PC-9 (cell line): ENCODE measurements at regions of chr2 and their contacts with region 1.

Region 1: GRCh38 chr2:241355983-241356870 is at the start of gene FARP2:
- DNase-seq: peak; percentile 97 to 100
- H3K4me3 ChIP-seq: peak within 1 kb of the TSS; percentile 89
- H3K27ac ChIP-seq: peak within 1 kb of the TSS; percentile 53
- H3K4me1 ChIP-seq: peaks cover 44% of the 10 kb centered on the region
- H3K27me3 ChIP-seq: no peaks in the 10 kb centered on the region
- CTCF ChIP-seq: no peak
- total RNA-seq, gene FARP2: 81.5 and 89.1 TPM in 2 replicates

Region 2: GRCh38 chr2:240851078-240851991 is 504.9 kb before region 1 on chr2:
- CTCF ChIA-PET with region 1: no interaction called
- POLR2A ChIA-PET with region 1: no interaction called
- intact Hi-C with region 1: loop called (anchors 10 kb)
- DNase-seq: peak; percentile 64 to 91
- H3K4me3 ChIP-seq: no peak overlapping the region
- H3K27ac ChIP-seq: no peak overlapping the region
- H3K4me1 ChIP-seq: no peaks in the 10 kb centered on the region
- H3K27me3 ChIP-seq: no peaks in the 10 kb centered on the region
- CTCF ChIP-seq: peak; percentile 97

Region 3: GRCh38 chr2:241232736-241233554 is 123.3 kb before region 1 on chr2:
- CTCF ChIA-PET with region 1: no interaction called
- POLR2A ChIA-PET with region 1: no interaction called
- intact Hi-C with region 1: no loop called
- DNase-seq: no peak
- H3K4me3 ChIP-seq: no peak overlapping the region
- H3K27ac ChIP-seq: no peak overlapping the region
- H3K4me1 ChIP-seq: no peaks in the 10 kb centered on the region
- H3K27me3 ChIP-seq: no peaks in the 10 kb centered on the region
- CTCF ChIP-seq: no peak

Region 4: GRCh38 chr2:241315093-241315878 is 40.9 kb before region 1 on chr2 and contains the start of gene HDLBP:
- CTCF ChIA-PET with region 1: no interaction called
- POLR2A ChIA-PET with region 1: interaction called, 3 read pairs
- intact Hi-C with region 1: loop called (anchors 5 kb)
- DNase-seq: peak; percentile 95 to 100
- H3K4me3 ChIP-seq: peak within 1 kb of the TSS; percentile 95
- H3K27ac ChIP-seq: peak within 1 kb of the TSS; percentile 96
- H3K4me1 ChIP-seq: peaks cover 39% of the 10 kb centered on the region
- H3K27me3 ChIP-seq: no peaks in the 10 kb centered on the region
- CTCF ChIP-seq: no peak
- total RNA-seq, gene HDLBP: 715 and 908 TPM in 2 replicates

Region 5: DNA sequence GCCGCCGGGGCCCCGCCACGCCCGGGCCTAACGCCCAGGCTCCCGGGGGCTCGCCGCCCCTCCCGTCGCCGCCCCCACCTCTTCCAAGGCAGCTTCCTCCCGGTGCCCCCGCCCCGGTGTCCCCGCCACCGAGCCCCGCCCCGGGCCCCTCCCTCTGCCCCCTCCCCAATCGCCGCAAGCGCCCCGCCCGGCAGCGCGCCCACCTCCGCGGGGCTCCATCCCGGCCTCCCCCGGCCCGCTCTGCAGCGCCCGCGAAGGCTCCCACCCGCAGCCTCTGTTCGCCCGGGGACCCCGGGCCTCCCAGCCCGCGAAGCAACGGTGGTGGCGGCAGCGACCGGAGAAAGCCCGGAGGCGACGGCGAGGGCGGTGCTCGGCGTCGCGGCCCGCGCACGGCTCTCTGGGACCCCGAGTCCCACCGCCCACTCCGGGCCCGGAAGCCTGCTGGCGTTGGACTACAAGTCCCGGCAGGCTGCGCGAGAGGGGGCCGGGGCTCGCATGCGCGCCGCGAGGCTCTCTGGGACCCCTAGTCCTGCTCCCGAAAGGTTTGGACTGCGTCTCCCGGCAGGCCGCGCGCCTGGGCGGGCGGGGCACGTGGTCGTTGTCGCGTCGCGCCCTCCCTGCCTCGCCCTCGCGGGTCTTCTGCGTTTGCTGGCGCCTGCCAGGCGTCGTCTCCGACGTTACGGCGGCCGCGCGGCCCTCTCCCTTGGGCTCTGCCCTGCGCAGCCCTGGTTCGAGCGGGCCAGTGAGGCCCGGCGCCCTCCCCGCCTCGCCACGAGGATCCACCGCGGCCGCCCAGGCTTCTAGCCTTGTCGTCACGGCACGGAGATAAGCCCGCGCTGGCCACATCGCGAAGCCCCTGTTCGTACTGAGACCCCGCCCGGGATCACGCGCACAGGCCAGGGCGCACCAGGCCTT is 152.3 kb after region 1 on chr2 and contains the start of gene STK25:
- CTCF ChIA-PET with region 1: no interaction called
- POLR2A ChIA-PET with region 1: no interaction called
- intact Hi-C with region 1: loop called (anchors 1 kb)
- DNase-seq: peak; percentile 96 to 100
- H3K4me3 ChIP-seq: peak within 1 kb of the TSS; percentile 97
- H3K27ac ChIP-seq: peak within 1 kb of the TSS; percentile 52; the same call in 1 of the 2 replicates
- H3K4me1 ChIP-seq: peaks cover 19% of the 10 kb centered on the region
- H3K27me3 ChIP-seq: no peaks in the 10 kb centered on the region
- CTCF ChIP-seq: no peak
- total RNA-seq, gene STK25: 201 and 268 TPM in 2 replicates

Region 6: GRCh38 chr2:241598480-241598879 is 242.3 kb after region 1 on chr2:
- CTCF ChIA-PET with region 1: no interaction called
- POLR2A ChIA-PET with region 1: no interaction called
- intact Hi-C with region 1: loop called (anchors 5 kb)
- DNase-seq: peak; percentile 48 to 64
- H3K4me3 ChIP-seq: no peak overlapping the region
- H3K27ac ChIP-seq: no peak overlapping the region
- H3K4me1 ChIP-seq: no peaks in the 10 kb centered on the region
- H3K27me3 ChIP-seq: no peaks in the 10 kb centered on the region
- CTCF ChIP-seq: peak; percentile 61; the same call in 1 of the 2 replicates

Region 7: DNA sequence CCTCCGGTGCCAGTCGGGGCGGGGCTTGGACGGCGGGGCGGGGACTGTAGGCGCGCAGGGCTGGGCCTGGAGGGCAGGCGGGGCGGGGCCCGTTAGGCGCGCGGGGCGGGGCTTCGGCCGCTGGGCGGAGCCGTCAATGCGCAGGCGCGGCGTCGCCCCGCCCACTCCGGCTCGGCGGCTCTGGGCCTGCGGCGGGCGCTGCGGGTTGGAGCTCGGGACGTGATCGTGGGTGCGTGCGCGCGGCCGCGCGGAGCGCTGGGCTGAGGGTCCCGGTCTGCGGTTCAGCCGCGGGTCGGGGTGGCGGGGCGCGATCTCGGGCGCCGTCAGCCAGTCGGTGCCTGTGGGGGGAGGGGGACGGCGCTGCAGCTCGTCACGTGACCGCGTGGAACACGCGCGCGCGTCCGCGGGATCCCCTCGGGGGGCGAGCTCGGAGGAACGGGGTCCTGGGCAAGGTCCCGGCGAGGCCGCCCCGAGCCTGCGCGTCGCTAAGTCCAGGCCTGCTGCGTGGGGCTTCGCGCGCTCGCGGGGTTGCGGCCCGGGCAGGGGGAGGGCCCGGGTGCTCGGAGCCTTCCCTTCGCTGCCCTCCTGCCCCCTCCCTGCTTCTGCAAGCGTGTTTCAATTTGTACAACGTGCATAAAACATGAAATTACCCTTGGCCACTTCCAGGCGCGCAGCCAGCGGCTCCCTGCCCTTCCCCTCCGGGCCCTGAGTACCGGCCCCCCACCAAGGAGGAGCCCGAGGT is 378.4 kb after region 1 on chr2 and contains the start of gene D2HGDH:
- CTCF ChIA-PET with region 1: no interaction called
- POLR2A ChIA-PET with region 1: interaction called, 10 read pairs
- intact Hi-C with region 1: loop called (anchors 2 kb)
- DNase-seq: peak; percentile 65 to 98
- H3K4me3 ChIP-seq: peak within 1 kb of the TSS; percentile 85
- H3K27ac ChIP-seq: peak within 1 kb of the TSS; percentile 36
- H3K4me1 ChIP-seq: peaks cover 16% of the 10 kb centered on the region
- H3K27me3 ChIP-seq: no peaks in the 10 kb centered on the region
- CTCF ChIP-seq: no peak
- total RNA-seq, gene D2HGDH: 131 and 232 TPM in 2 replicates